ENCODE measurements at regions of chr7 and their contacts with region 1.

Region 1: DNA sequence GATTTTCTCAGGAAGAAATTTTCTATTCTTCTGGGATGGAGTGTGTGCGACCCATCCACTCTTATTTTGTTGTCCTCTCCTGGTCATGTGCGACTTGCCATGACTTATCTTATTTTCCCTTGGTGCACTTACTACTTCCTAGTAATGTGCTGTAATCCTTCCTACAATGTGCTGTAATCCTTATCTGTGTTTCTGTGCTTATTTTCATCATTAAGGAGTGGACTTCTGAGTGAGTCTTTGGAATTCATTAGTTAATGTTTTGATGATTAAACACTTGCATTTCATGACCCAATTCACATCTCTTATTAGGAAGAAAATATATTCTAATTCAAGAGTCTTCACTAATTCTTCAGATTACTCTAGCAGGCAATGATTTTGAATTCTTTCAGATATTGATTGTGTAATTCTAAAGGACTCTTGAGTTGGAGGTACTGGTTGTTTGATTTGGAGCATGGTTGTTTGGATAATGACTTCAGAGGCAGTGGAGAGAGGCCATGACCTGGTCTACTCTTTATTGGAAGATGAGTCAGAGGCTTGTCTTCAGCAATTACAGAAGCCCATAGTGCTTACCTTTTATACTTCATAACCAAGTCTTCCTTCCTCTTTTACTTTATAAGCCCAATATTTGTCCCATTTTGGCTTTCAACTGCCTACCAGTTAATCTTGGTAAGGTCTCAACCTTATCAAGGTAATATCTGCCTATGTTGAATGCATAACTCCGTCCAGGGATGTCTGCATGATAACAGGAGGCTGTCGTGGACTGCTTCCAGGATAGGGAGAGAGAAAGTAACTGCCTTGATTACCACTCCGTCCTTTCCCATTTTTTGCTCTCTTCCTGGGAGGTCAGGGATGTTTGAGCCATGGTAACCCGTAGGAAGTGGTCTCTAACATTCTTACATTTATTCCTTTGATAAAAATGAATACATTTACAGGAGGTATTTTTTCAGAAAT is 278.3 kb upstream of the SP8 start:
- DNase-seq: no peak
- H3K4me3 Mint-ChIP-seq: no peak overlapping the region
- H3K27ac Mint-ChIP-seq: no peak overlapping the region
- H3K4me1 Mint-ChIP-seq: no peaks in the 10 kb centered on the region
- H3K27me3 Mint-ChIP-seq: peaks cover 3% of the 10 kb centered on the region

Region 2: GRCh38 chr7:21128062-21128817 is 63.3 kb after region 1 on chr7:
- intact Hi-C with region 1: loop called (anchors 10 kb)
- DNase-seq: no peak
- H3K4me3 Mint-ChIP-seq: no peak overlapping the region
- H3K27ac Mint-ChIP-seq: no peak overlapping the region
- H3K4me1 Mint-ChIP-seq: no peaks in the 10 kb centered on the region
- H3K27me3 Mint-ChIP-seq: peaks cover 3% of the 10 kb centered on the region

Region 3: GRCh38 chr7:21305455-21306235 is 240.7 kb after region 1 on chr7:
- intact Hi-C with region 1: no loop called
- DNase-seq: no peak
- H3K4me3 Mint-ChIP-seq: no peak overlapping the region
- H3K27ac Mint-ChIP-seq: peak overlapping the region; percentile 43
- H3K4me1 Mint-ChIP-seq: peaks cover 15% of the 10 kb centered on the region
- H3K27me3 Mint-ChIP-seq: no peaks in the 10 kb centered on the region

Measured in activated CD4-positive, alpha-beta T cell treated with anti-CD3 and anti-CD28 coated beads, Interleukin-2, amount 10 ng/mL, durations not matched to agents 24 days and 14 days (primary cell).